OCI-LY7 (cell line): ENCODE measurements at regions of chr1 and their contacts with region 1.

Region 1: DNA sequence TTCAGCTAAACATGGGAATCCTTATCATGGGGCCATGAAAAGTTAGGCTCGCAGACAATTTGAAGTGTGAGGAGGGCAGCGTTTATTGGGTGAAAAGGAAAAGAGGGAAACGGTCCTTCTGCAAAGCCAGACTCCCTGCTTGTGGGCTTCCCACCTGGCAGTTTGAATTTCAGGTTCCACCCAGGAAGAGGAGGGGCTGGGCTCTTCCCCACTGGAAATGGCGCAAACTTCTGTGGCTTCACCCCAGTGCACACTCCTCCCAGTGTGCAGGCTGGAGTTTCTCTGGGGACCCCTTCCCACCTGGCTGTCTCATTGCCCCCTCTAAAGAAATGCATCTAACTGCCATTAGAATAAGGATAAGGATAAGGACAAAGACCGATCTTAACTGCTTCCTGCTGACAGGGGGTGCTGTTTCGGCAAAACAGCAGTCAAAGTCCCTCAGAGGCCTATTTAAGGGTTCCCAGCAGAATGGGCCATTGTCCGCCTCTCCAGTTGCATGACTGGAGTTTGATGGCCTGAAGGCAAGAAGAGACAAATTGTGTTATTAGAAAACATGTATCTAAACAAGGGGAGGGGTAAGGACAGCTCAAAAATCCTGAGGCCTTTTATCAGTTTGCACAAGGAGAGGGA is 20.4 kb downstream of the AIM2 start:
- DNase-seq: peak; percentile 35
- H3K4me3 ChIP-seq: no peak overlapping the region
- H3K27ac ChIP-seq: peak overlapping the region; percentile 20
- H3K4me1 ChIP-seq: peaks cover 18% of the 10 kb centered on the region
- CTCF ChIP-seq: peak; percentile 70

Region 2: DNA sequence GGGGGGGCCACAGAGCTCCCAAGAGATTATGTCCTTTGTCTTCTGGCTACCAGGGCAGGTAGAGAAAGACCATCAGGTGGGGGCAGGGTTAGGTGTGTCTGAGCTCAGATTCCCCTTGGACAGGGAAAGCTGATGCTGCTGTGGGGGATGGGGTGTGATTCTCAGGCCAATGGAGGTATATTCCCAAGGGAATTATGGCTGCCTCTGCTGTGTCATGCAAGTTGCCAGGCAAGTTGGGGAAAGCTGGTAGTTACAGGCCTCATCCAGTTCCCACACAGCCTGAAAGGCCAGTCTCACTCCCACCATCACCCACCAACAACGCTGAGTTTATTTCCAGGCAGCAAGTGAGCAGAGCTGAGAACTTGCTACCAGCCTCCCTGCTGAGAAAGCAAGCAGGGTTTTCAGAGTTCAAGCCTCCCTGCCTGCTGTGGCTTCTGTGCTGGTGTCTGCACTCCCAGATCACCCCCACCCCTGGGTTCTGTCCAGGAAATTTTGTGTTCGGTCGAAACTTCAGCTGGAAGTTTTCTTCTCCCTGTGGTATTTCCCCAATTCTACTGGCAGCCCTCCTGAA is 25.2 kb before region 1 on chr1:
- CTCF ChIA-PET with region 1: no interaction called
- POLR2A ChIA-PET with region 1: interaction called, 3 read pairs
- intact Hi-C with region 1: loop called (anchors 2 kb)
- DNase-seq: no peak
- H3K4me3 ChIP-seq: no peak overlapping the region
- H3K27ac ChIP-seq: no peak overlapping the region
- H3K4me1 ChIP-seq: no peaks in the 10 kb centered on the region
- CTCF ChIP-seq: no peak